Gastrocnemius medialis (tissue), 4 donors: ENCODE measurements at regions of chr9 and their contacts with region 1.

Region 1: GRCh38 chr9:131349881-131350563 is 43.9 kb upstream of the PRRC2B start:
- DNase-seq: peak; percentile 75 to 79
- ATAC-seq: peak; percentile 81 to 83
- H3K4me3 ChIP-seq: peak overlapping the region in 3 of 4 donors; percentile 29 to 61 (median 51)
- H3K27ac ChIP-seq: peak overlapping the region in 2 of 4 donors; percentile 34 to 47
- H3K4me1 ChIP-seq: peaks cover 8 to 12% of the 10 kb centered on the region in 2 donors
- H3K27me3 ChIP-seq: no peaks in the 10 kb centered on the region
- CTCF ChIP-seq: peak; percentile 80 to 92 (median 90)
- POLR2A ChIP-seq: no peak

Region 2: GRCh38 chr9:130927995-130928900 is 421.8 kb before region 1 on chr9:
- in situ Hi-C with region 1: no loop called
- intact Hi-C with region 1: no loop called
- DNase-seq: no peak
- ATAC-seq: no peak
- H3K4me3 ChIP-seq: no peak overlapping the region
- H3K27ac ChIP-seq: no peak overlapping the region
- H3K4me1 ChIP-seq: no peaks in the 10 kb centered on the region
- H3K27me3 ChIP-seq: peaks cover 12 to 17% (median 15%) of the 10 kb centered on the region in 3 donors
- CTCF ChIP-seq: no peak
- POLR2A ChIP-seq: no peak

Region 3: GRCh38 chr9:131423171-131423581 is 73.2 kb after region 1 on chr9:
- in situ Hi-C with region 1: no loop called
- intact Hi-C with region 1: loop called (anchors 2 kb)
- DNase-seq: peak in 1 of 2 donors; percentile 66
- ATAC-seq: peak; percentile 71 to 81
- H3K4me3 ChIP-seq: peak overlapping the region in 1 of 4 donors; percentile 13
- H3K27ac ChIP-seq: peak overlapping the region; percentile 64 to 69 (median 67)
- H3K4me1 ChIP-seq: peaks cover 56 to 63% of the 10 kb centered on the region in 2 donors
- H3K27me3 ChIP-seq: no peaks in the 10 kb centered on the region
- CTCF ChIP-seq: no peak
- POLR2A ChIP-seq: no peak

Region 4: DNA sequence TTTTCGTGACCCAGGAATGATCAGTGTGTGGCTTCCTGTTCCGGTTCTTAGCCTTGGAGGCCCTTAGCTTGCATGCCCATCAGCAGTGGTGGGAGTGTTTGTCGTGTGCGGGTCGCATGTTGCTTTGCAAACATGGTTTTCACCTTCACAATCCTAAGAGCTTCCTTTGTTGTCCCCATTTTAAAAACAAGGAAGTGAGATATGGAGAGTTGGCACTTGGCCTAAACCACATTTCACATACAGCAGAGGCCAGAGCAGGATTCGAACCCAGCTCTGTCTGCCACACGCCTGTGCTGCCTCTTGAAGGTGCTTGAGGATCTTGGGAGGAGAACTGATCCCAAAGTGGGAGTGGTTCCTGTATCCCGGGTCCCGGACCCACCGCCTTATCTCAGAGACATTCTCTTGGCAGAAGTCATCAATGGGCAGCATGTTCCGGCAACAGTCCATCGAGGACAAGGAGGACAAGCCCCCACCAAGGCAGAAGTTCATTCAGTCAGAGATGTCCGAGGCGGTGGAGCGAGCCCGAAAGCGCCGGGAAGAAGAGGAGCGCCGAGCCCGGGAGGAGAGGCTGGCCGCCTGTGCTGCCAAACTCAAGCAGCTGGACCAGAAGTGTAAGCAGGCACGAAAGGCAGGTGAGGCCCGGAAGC is 114.5 kb after region 1 on chr9:
- in situ Hi-C with region 1: loop called in 1 of 4 experiments (anchors 25 kb)
- intact Hi-C with region 1: no loop called
- DNase-seq: no peak
- ATAC-seq: no peak
- H3K4me3 ChIP-seq: no peak overlapping the region
- H3K27ac ChIP-seq: no peak overlapping the region
- H3K4me1 ChIP-seq: peaks cover 0 to 3% of the 10 kb centered on the region in 2 donors
- H3K27me3 ChIP-seq: no peaks in the 10 kb centered on the region
- CTCF ChIP-seq: no peak
- POLR2A ChIP-seq: no peak

Region 5: DNA sequence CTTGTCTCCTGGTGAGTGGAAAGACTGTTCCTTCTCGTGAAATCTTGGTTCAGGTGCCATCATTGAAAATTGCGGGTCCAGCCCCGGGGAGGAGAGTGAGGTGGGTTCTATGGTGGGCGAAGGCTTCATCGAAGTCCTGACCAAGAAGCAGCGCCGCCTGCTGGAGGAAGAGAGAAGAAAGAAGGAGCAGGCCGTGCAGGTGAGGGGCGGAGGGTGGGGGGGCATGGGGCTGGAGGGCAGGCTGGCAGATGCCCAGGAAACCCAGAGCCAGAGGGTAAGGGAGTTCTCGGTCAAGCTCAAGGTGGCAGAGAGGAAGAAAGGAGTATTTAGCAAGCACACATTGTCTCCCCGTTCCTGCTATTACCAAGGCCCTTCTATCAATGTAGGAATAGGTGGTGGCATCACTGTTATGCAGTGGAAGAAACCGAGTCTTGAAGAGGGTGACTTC is 128.4 kb after region 1 on chr9:
- in situ Hi-C with region 1: loop called in 1 of 4 experiments (anchors 25 kb)
- intact Hi-C with region 1: loop called (anchors 1 kb)
- DNase-seq: no peak
- ATAC-seq: no peak
- H3K4me3 ChIP-seq: no peak overlapping the region
- H3K27ac ChIP-seq: peak overlapping the region; percentile 7 to 90 (median 80)
- H3K4me1 ChIP-seq: peaks cover 22 to 43% of the 10 kb centered on the region in 2 donors
- H3K27me3 ChIP-seq: no peaks in the 10 kb centered on the region
- CTCF ChIP-seq: peak in 4 of 5 experiments; percentile 40 to 66 (median 48)
- POLR2A ChIP-seq: no peak

Region 6: GRCh38 chr9:131747356-131747755 is 397.3 kb after region 1 on chr9:
- in situ Hi-C with region 1: loop called (anchors 10 to 25 kb)
- intact Hi-C with region 1: loop called (anchors 2 kb)
- DNase-seq: peak in 1 of 2 donors; percentile 49
- ATAC-seq: peak; percentile 82 to 88
- H3K4me3 ChIP-seq: no peak overlapping the region
- H3K27ac ChIP-seq: no peak overlapping the region
- H3K4me1 ChIP-seq: peaks cover 0 to 10% of the 10 kb centered on the region in 2 donors
- H3K27me3 ChIP-seq: no peaks in the 10 kb centered on the region
- CTCF ChIP-seq: peak; percentile 50 to 75 (median 67)
- POLR2A ChIP-seq: no peak